A549 (cell line): ENCODE measurements at regions of chr16 and their contacts with region 1.

Region 1: GRCh38 chr16:48687421-48688038 is 77.5 kb upstream of the N4BP1 start:
- DNase-seq: peak; percentile 70 to 83
- ATAC-seq: peak; percentile 92 to 99
- H3K4me3 ChIP-seq: no peak overlapping the region
- H3K27ac ChIP-seq: no peak overlapping the region
- H3K4me1 ChIP-seq: no peaks in the 10 kb centered on the region
- CTCF ChIP-seq: peak; percentile 77
- EP300 ChIP-seq: no peak
- POLR2A ChIP-seq: no peak
- RAD21 ChIP-seq: peak; percentile 82

Region 2: DNA sequence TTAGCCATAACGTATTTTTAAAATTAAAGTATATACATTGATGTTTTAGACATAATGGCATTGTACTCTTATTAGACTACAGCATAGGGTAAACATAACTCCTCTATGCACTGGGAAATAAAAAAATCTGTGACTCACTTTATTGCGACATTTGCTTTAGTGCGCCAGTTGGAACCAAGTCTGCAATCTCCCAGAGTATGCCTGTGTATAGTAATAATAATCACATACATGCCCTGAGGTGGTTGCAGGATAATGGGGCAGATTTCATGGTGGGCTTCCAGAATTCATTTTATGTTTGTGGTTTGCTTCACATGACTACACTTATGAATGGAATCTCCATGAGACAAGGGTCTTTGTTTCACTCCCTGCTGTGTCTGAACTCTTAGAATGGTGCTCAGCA is 10.7 kb before region 1 on chr16:
- CTCF ChIA-PET with region 1: interaction called, 12 read pairs
- POLR2A ChIA-PET with region 1: no interaction called
- DNase-seq: no peak
- ATAC-seq: no peak
- H3K4me3 ChIP-seq: no peak overlapping the region
- H3K27ac ChIP-seq: no peak overlapping the region
- H3K4me1 ChIP-seq: no peaks in the 10 kb centered on the region
- CTCF ChIP-seq: no peak
- EP300 ChIP-seq: no peak
- POLR2A ChIP-seq: no peak
- RAD21 ChIP-seq: no peak

Region 3: GRCh38 chr16:48810803-48811453 is 123.4 kb after region 1 on chr16:
- CTCF ChIA-PET with region 1: no interaction called
- POLR2A ChIA-PET with region 1: no interaction called
- DNase-seq: no peak
- ATAC-seq: no peak
- H3K4me3 ChIP-seq: no peak overlapping the region
- H3K27ac ChIP-seq: no peak overlapping the region
- H3K4me1 ChIP-seq: no peaks in the 10 kb centered on the region
- CTCF ChIP-seq: no peak
- EP300 ChIP-seq: no peak
- POLR2A ChIP-seq: no peak
- RAD21 ChIP-seq: no peak

Region 4: GRCh38 chr16:48971571-48972077 is 284.1 kb after region 1 on chr16:
- CTCF ChIA-PET with region 1: no interaction called
- POLR2A ChIA-PET with region 1: no interaction called
- DNase-seq: no peak
- ATAC-seq: no peak
- H3K4me3 ChIP-seq: no peak overlapping the region
- H3K27ac ChIP-seq: no peak overlapping the region
- H3K4me1 ChIP-seq: no peaks in the 10 kb centered on the region
- CTCF ChIP-seq: no peak
- EP300 ChIP-seq: no peak
- POLR2A ChIP-seq: no peak
- RAD21 ChIP-seq: no peak

Region 5: DNA sequence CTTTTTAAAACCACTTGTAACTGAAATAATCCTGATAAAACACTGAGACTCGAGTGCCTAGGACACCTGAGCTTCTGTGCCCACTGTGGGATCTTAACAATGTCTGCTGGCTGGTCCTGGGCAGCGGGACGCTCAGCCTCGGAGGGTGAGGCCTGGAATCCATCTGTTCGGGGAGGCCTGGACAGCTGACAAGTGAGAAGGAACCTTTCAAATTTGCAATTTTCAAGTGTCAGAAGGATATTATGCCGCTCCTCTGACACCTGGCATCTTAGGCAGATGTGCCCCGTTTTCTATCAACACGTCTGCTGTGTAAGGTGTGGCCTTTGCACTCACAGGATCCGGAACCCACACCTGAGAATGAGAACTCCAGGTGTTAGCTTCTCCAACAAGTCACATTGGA is 652.9 kb after region 1 on chr16:
- CTCF ChIA-PET with region 1: interaction called, 11 read pairs
- POLR2A ChIA-PET with region 1: no interaction called
- DNase-seq: no peak
- ATAC-seq: no peak
- H3K4me3 ChIP-seq: no peak overlapping the region
- H3K27ac ChIP-seq: no peak overlapping the region
- H3K4me1 ChIP-seq: no peaks in the 10 kb centered on the region
- CTCF ChIP-seq: no peak
- EP300 ChIP-seq: no peak
- POLR2A ChIP-seq: no peak
- RAD21 ChIP-seq: no peak

Region 6: DNA sequence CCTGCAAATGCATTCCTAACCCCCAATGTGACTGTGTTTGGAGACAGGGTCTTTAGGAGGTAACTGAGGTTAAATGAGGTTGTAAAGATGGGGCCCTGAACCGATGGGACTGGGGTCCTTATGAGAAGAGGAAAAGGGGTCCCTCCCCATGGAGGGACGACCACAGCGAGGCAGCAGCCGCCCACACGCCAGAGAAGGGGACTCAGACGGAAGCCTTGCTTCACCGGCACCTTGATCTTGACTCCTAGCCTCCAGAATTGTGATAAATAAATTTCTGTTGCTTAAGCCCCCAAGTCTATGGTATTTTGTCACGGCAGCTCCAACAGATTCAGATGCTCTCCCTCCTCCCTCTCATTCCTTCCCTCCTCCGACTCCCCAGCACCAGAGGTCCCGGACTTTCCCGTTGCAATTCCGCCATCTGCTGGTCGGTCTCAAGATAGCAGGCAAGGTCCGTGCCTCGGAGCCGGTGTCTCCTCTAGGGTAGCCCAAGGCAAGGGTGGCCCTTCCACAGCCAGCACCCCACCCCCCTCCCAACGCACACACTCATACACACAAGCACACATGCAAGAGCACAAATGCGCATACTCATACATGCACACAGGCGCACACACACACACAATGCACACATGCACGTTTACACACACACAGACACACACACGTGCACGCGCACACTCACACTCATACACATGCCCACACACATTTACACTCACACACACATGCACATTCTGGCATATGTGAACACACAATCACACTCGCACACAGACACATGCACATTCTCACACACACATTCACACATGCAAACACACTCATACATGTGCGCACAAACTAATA is 663.0 kb after region 1 on chr16:
- CTCF ChIA-PET with region 1: interaction called, 60 read pairs
- POLR2A ChIA-PET with region 1: no interaction called
- DNase-seq: peak; percentile 41 to 54
- ATAC-seq: peak; percentile 75 to 86
- H3K4me3 ChIP-seq: no peak overlapping the region
- H3K27ac ChIP-seq: no peak overlapping the region
- H3K4me1 ChIP-seq: no peaks in the 10 kb centered on the region
- CTCF ChIP-seq: peak; percentile 67
- EP300 ChIP-seq: no peak
- POLR2A ChIP-seq: no peak
- RAD21 ChIP-seq: peak; percentile 78 to 88